ENCODE measurements at regions of chr12 and their contacts with region 1.

Region 1: GRCh38 chr12:78249578-78249977 is 418.9 kb downstream of the NAV3 start:
- DNase-seq: no peak
- CTCF ChIP-seq: no peak

Region 2: GRCh38 chr12:78220811-78221210 is 28.8 kb before region 1 on chr12:
- CTCF ChIA-PET with region 1: no interaction called
- POLR2A ChIA-PET with region 1: no interaction called
- DNase-seq: no peak
- CTCF ChIP-seq: no peak

Region 3: DNA sequence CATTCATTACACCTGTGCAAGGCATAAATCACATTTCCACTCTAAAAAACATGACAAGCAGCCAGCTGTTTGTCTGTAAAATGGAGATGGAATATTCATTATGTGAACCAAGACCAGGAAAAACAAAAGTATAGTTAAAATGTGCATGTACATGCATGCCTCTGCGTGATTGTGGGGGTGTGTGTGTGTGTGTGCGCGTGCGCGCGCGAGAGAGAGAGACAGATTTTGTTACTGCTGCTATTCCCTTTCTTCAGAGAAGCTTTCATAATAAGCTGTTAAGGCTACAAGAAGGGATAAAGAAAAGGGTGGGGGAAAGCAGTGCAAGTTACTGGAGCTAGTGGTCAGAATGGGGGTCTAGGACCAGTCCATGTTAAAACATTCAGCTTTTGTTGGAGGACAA is 11.4 kb after region 1 on chr12:
- CTCF ChIA-PET with region 1: interaction called, 10 read pairs
- POLR2A ChIA-PET with region 1: no interaction called
- DNase-seq: no peak
- CTCF ChIP-seq: no peak

Measured in GM10248 (cell line).